ENCODE measurements at regions of chr18 and their contacts with region 1.

Region 1: DNA sequence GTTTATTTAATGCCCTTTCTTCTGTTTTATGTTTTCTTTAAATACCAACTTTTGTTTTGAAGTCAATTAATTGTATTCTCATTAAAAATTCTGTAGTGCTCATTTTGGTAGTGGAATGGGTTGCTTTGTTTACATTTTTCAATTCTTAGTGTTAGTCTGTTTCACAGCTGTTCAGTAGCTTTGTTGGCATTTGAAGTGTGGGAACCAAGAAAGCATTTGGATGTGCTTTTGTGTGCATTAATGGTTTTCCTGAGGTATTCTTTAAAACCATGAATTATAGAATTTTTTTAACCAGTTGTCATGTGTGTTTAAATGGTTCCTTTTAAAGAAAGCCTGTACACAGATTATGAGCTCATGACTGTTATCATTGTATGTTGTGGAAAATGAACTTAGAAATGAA is 19.7 kb downstream of the MIB1 start:
- DNase-seq: no peak
- H3K4me3 ChIP-seq: no peak overlapping the region
- H3K27ac ChIP-seq: no peak overlapping the region
- H3K4me1 ChIP-seq: peaks cover 0 to 13% of the 10 kb centered on the region in 2 donors
- H3K27me3 ChIP-seq: no peaks in the 10 kb centered on the region
- CTCF ChIP-seq: no peak
- POLR2A ChIP-seq: no peak

Region 2: GRCh38 chr18:21820035-21820810 is 59.9 kb after region 1 on chr18:
- intact Hi-C with region 1: loop called in 1 of 2 experiments (anchors 10 kb)
- DNase-seq: no peak
- H3K4me3 ChIP-seq: no peak overlapping the region
- H3K27ac ChIP-seq: no peak overlapping the region
- H3K4me1 ChIP-seq: no peaks in the 10 kb centered on the region
- H3K27me3 ChIP-seq: no peaks in the 10 kb centered on the region
- CTCF ChIP-seq: peak; percentile 43 to 69 (median 48)
- POLR2A ChIP-seq: no peak

Measured in adrenal gland (tissue), 19 donors.